HCT116 (cell line): ENCODE measurements at regions of chr6 and their contacts with region 1.

Region 1: DNA sequence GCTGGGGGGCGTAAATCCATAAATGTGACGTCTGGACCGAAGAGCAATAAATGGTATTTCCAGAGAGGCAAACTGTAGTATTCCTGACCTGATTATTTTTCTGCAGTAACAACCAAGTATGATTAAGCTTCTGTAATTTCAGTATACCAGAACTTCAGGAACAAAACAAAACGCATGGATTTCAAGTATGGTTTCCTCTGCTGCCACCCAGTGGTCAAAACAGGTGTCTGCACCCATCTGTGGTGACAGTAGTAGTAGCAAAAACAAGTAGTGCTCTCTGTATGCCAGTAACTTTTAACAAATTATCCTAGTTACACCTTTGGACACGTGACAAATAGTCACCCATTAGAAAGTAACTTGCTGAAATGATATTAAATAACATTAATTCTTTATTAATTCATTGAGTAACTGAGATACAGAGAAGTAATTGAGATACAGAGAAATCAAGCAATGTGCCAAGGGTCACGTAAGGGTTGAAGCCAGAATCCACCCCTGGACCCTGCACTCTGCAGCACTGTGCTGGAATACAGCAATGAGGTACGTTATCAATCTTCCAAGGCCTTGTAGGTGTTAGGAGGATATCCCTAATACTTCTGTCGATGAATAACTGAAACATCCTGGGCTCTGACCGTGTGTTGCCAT is 7.9 kb downstream of the CALHM4 start:
- DNase-seq: peak; percentile 55
- ATAC-seq: peak; percentile 80
- H3K4me3 ChIP-seq: no peak overlapping the region
- H3K27ac ChIP-seq: no peak overlapping the region
- H3K4me1 ChIP-seq: peaks cover 3 to 20% of the 10 kb centered on the region in 2 experiments; a peak in 3 of 4 replicates
- H3K27me3 ChIP-seq: no peaks in the 10 kb centered on the region
- CTCF ChIP-seq: peak; percentile 90 to 95 (median 91)
- POLR2A ChIP-seq: no peak
- RAD21 ChIP-seq: peak; percentile 87

Region 2: DNA sequence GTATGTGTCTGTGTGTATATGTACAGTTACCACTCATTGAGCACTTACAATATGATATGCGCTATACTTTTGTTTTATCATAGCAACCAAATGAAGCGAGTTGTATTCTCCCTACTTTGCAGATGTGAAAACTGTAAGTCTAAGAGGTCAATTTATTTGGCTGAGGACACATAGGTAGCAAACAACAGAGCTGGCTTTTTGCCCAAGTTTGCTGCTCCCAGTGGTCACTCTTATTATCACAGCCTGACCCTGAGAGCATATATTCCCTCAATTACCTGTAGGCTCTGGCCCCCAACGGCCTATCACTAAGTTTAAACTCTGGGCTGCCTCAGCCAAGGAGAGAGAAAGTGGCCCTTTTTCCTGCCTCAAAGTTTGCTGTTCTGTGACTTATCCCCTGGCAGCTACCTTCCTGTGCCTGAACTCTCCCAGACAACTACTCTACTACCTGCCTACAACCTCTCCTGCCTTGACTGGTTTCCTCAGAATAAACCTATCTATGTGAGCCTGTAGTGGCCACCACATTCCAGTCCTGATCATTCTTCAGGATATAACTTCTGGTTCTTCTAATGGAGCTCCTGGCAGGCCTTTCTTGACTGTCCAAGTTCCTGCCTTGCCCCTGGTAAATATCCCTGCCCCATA is 722.6 kb before region 1 on chr6:
- CTCF ChIA-PET with region 1: no interaction called
- POLR2A ChIA-PET with region 1: no interaction called
- RAD21 ChIA-PET with region 1: no interaction called
- intact Hi-C with region 1: no loop called
- DNase-seq: peak; percentile 55
- ATAC-seq: peak; percentile 96
- H3K4me3 ChIP-seq: no peak overlapping the region
- H3K27ac ChIP-seq: no peak overlapping the region
- H3K4me1 ChIP-seq: no peaks in the 10 kb centered on the region
- H3K27me3 ChIP-seq: 0 out of 2 replicates have a peak, but pooled peaks cover 4% of the 10 kb centered on the region
- CTCF ChIP-seq: peak; percentile 23 to 78 (median 67); a peak in 4 of 6 replicates
- POLR2A ChIP-seq: no peak
- RAD21 ChIP-seq: no peak

Region 3: DNA sequence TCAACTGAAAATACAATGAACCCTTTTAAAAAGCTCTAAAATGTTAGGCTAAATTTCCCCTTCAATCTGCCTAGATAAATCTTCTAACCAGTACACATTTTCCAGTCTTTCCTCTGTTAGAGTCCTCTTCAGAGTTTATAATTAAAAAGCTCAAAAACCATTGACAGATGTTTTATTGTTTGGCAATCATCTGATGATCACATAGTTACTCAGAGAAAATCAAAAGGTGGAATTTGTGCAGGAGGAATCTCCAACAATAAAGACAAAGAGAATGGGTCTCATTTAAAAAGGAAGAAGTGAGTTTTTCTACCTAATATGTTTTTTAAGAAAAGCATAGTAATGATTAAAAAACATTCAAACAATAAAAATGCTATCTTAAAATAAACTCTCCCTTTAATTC is 19.1 kb before region 1 on chr6:
- CTCF ChIA-PET with region 1: interaction called, 10 read pairs
- POLR2A ChIA-PET with region 1: no interaction called
- RAD21 ChIA-PET with region 1: no interaction called
- intact Hi-C with region 1: no loop called
- DNase-seq: no peak
- ATAC-seq: no peak
- H3K4me3 ChIP-seq: no peak overlapping the region
- H3K27ac ChIP-seq: no peak overlapping the region
- H3K4me1 ChIP-seq: no peaks in the 10 kb centered on the region
- H3K27me3 ChIP-seq: no peaks in the 10 kb centered on the region
- CTCF ChIP-seq: no peak
- POLR2A ChIP-seq: no peak
- RAD21 ChIP-seq: no peak

Region 4: GRCh38 chr6:116577486-116577885 is 16.0 kb after region 1 on chr6:
- CTCF ChIA-PET with region 1: no interaction called
- POLR2A ChIA-PET with region 1: no interaction called
- RAD21 ChIA-PET with region 1: no interaction called
- intact Hi-C with region 1: no loop called
- DNase-seq: no peak
- ATAC-seq: no peak
- H3K4me3 ChIP-seq: no peak overlapping the region
- H3K27ac ChIP-seq: no peak overlapping the region
- H3K4me1 ChIP-seq: peaks cover 5 to 8% of the 10 kb centered on the region in 2 experiments; a peak in 1 of 4 replicates
- H3K27me3 ChIP-seq: no peaks in the 10 kb centered on the region
- CTCF ChIP-seq: no peak
- POLR2A ChIP-seq: no peak
- RAD21 ChIP-seq: no peak